Naive thymus-derived CD4-positive, alpha-beta T cell (primary cell): ENCODE measurements at regions of chr5 and their contacts with region 1.

Region 1: GRCh38 chr5:6377905-6378765 is at the start of gene MED10:
- DNase-seq: peak; percentile 85 to 96 (median 93)
- ATAC-seq: peak; percentile 99
- H3K4me3 ChIP-seq: peak within 1 kb of the TSS; percentile 92
- H3K4me3 Mint-ChIP-seq: peak within 1 kb of the TSS; percentile 89 to 100 (median 98)
- H3K27ac ChIP-seq: peak within 1 kb of the TSS; percentile 94
- H3K27ac Mint-ChIP-seq: peak within 1 kb of the TSS; percentile 95 to 99 (median 96)
- H3K4me1 ChIP-seq: peaks cover 23 to 24% of the 10 kb centered on the region in 2 donors
- H3K4me1 Mint-ChIP-seq: peaks cover 30 to 64% (median 55%) of the 10 kb centered on the region in 7 donors
- H3K27me3 ChIP-seq: no peaks in the 10 kb centered on the region
- H3K27me3 Mint-ChIP-seq: peaks cover 0 to 4% (median 0%) of the 10 kb centered on the region in 5 donors
- total RNA-seq, gene MED10: 46.0 to 79.7 (median 61.2) TPM

Region 2: DNA sequence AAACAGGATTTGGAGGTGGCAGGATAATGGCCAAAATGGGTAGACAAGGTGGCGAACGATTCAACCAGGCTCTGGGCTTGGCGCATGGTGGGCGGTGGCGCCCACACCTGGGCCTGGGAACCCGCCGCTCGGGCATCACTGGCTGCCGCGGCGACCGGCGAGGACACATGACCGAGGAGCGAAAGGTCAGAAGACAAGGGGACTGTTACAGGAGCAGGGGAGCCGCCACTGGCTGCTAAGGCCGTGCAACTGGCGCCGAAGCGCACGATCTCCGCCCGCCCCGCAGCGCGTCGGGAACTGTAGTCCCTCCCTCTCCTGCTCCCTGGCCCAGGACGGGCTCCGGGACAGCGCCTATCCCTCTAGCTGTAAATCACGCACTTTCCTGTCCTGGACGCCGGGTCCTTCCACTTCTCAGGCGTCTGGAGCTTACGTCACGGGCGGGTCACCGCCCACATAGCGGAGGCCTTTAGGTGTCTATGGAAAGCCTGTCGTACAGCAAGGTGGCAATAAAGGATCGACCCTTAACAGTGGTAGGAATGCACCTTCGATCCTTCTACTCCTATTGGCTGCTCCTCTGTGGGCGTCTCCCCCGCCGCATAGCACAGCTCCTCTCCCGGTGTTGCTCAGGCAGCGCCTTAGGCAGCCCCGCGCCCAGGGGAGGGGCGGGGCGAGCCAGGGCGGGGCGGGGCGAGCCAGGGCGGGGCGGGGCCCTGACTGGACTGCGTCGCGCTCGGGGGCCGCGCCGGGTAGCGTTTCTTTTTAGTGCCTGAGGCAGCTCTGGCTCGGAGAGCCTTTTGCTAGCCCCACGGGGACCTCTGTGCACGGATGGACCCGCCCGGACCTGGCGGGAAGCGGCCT is 955.9 kb before region 1 on chr5 and contains the start of gene ICE1:
- CTCF ChIA-PET with region 1: no interaction called
- POLR2A ChIA-PET with region 1: interaction called, 12 read pairs
- intact Hi-C with region 1: loop called (anchors 1 kb)
- DNase-seq: peak; percentile 89 to 99 (median 96)
- ATAC-seq: peak; percentile 93
- H3K4me3 ChIP-seq: peak within 1 kb of the TSS; percentile 84
- H3K4me3 Mint-ChIP-seq: peak within 1 kb of the TSS in 7 of 10 donors; percentile 88 to 96 (median 93)
- H3K27ac ChIP-seq: peak within 1 kb of the TSS; percentile 90
- H3K27ac Mint-ChIP-seq: peak within 1 kb of the TSS in 7 of 9 donors; percentile 92 to 99 (median 97)
- H3K4me1 ChIP-seq: peaks cover 33 to 35% of the 10 kb centered on the region in 2 donors
- H3K4me1 Mint-ChIP-seq: peaks cover 6 to 24% (median 16%) of the 10 kb centered on the region in 7 donors
- H3K27me3 ChIP-seq: no peaks in the 10 kb centered on the region
- H3K27me3 Mint-ChIP-seq: no peaks in the 10 kb centered on the region
- total RNA-seq, gene ICE1: 30.2 to 47.6 (median 35.8) TPM

Region 3: GRCh38 chr5:6291961-6292360 is 86.2 kb before region 1 on chr5:
- CTCF ChIA-PET with region 1: no interaction called
- POLR2A ChIA-PET with region 1: no interaction called
- intact Hi-C with region 1: loop called in 1 of 2 experiments (anchors 5 kb)
- DNase-seq: peak in 6 of 9 donors; percentile 17 to 49 (median 28)
- ATAC-seq: no peak
- H3K4me3 ChIP-seq: no peak overlapping the region
- H3K4me3 Mint-ChIP-seq: no peak overlapping the region
- H3K27ac ChIP-seq: no peak overlapping the region
- H3K27ac Mint-ChIP-seq: no peak overlapping the region
- H3K4me1 ChIP-seq: no peaks in the 10 kb centered on the region
- H3K4me1 Mint-ChIP-seq: no peaks in the 10 kb centered on the region
- H3K27me3 ChIP-seq: no peaks in the 10 kb centered on the region
- H3K27me3 Mint-ChIP-seq: peaks cover 0 to 20% (median 7%) of the 10 kb centered on the region in 5 donors

Region 4: GRCh38 chr5:6488021-6488420 is 109.9 kb after region 1 on chr5:
- CTCF ChIA-PET with region 1: no interaction called
- POLR2A ChIA-PET with region 1: no interaction called
- intact Hi-C with region 1: loop called in 1 of 2 experiments (anchors 5 kb)
- DNase-seq: no peak
- ATAC-seq: no peak
- H3K4me3 ChIP-seq: no peak overlapping the region
- H3K4me3 Mint-ChIP-seq: no peak overlapping the region
- H3K27ac ChIP-seq: no peak overlapping the region
- H3K27ac Mint-ChIP-seq: peak overlapping the region in 2 of 9 donors; percentile 7 to 10
- H3K4me1 ChIP-seq: peaks cover 0 to 7% of the 10 kb centered on the region in 2 donors
- H3K4me1 Mint-ChIP-seq: peaks cover 2 to 41% (median 22%) of the 10 kb centered on the region in 7 donors
- H3K27me3 ChIP-seq: no peaks in the 10 kb centered on the region
- H3K27me3 Mint-ChIP-seq: peaks cover 0 to 20% (median 6%) of the 10 kb centered on the region in 5 donors

Region 5: DNA sequence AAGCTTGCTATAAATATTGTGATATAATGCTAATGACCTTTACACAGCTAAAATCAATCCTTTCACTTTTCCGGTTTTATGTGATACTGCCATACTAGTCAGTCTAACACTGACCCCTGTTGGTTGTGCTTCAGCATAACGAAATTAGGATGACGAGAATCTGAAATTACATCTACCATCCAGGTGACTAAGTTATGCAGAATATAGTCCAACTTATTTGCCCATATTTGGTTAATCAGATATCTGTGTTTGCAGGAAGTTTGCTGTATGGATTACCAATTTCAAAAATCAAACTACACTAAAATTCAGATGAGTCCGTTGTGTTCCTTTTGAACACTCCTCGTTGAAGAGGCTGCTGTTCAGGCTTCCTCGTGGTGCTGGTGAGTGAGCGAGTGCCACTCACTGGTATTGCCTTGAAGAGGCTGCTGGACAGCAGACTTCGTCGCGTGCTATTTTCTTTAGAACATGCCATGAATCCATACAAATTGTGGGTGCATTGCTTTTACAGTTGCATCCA is 367.6 kb after region 1 on chr5:
- CTCF ChIA-PET with region 1: no interaction called
- POLR2A ChIA-PET with region 1: no interaction called
- intact Hi-C with region 1: loop called (anchors 1 to 10 kb)
- DNase-seq: peak in 7 of 9 donors; percentile 33 to 62 (median 53)
- ATAC-seq: peak; percentile 85
- H3K4me3 ChIP-seq: no peak overlapping the region
- H3K4me3 Mint-ChIP-seq: no peak overlapping the region
- H3K27ac ChIP-seq: no peak overlapping the region
- H3K27ac Mint-ChIP-seq: peak overlapping the region in 3 of 9 donors; percentile 4 to 48 (median 36)
- H3K4me1 ChIP-seq: no peaks in the 10 kb centered on the region
- H3K4me1 Mint-ChIP-seq: peaks cover 2 to 10% (median 6%) of the 10 kb centered on the region in 7 donors
- H3K27me3 ChIP-seq: no peaks in the 10 kb centered on the region
- H3K27me3 Mint-ChIP-seq: no peaks in the 10 kb centered on the region